Heart left ventricle (tissue), 16 donors: ENCODE measurements at regions of chr7 and their contacts with region 1.

Region 1: GRCh38 chr7:35694781-35695472 is at the start of gene HERPUD2:
- DNase-seq: peak; percentile 94 to 96 (median 95)
- ATAC-seq: peak; percentile 96 to 98 (median 98)
- H3K4me3 ChIP-seq: peak within 1 kb of the TSS; percentile 79 to 98 (median 88)
- H3K27ac ChIP-seq: peak within 1 kb of the TSS; percentile 86 to 98 (median 98)
- H3K4me1 ChIP-seq: peaks cover 2 to 55% (median 45%) of the 10 kb centered on the region in 12 donors
- H3K27me3 ChIP-seq: no peaks in the 10 kb centered on the region
- CTCF ChIP-seq: peak in 2 of 12 donors; percentile 7 to 12
- POLR2A ChIP-seq: peak; percentile 14 to 92
- total RNA-seq, gene HERPUD2: 10.3 to 26.3 (median 17.1) TPM

Region 2: GRCh38 chr7:35647171-35647574 is 47.8 kb before region 1 on chr7:
- intact Hi-C with region 1: loop called in 1 of 10 experiments (anchors 10 kb)
- DNase-seq: peak in 1 of 5 donors; percentile 41
- ATAC-seq: peak; percentile 53 to 79 (median 74)
- H3K4me3 ChIP-seq: peak overlapping the region in 2 of 12 donors; percentile 2 to 9
- H3K27ac ChIP-seq: peak overlapping the region; percentile 22 to 70 (median 54)
- H3K4me1 ChIP-seq: peaks cover 6 to 65% (median 40%) of the 10 kb centered on the region in 12 donors
- H3K27me3 ChIP-seq: no peaks in the 10 kb centered on the region
- CTCF ChIP-seq: no peak
- POLR2A ChIP-seq: no peak

Region 3: DNA sequence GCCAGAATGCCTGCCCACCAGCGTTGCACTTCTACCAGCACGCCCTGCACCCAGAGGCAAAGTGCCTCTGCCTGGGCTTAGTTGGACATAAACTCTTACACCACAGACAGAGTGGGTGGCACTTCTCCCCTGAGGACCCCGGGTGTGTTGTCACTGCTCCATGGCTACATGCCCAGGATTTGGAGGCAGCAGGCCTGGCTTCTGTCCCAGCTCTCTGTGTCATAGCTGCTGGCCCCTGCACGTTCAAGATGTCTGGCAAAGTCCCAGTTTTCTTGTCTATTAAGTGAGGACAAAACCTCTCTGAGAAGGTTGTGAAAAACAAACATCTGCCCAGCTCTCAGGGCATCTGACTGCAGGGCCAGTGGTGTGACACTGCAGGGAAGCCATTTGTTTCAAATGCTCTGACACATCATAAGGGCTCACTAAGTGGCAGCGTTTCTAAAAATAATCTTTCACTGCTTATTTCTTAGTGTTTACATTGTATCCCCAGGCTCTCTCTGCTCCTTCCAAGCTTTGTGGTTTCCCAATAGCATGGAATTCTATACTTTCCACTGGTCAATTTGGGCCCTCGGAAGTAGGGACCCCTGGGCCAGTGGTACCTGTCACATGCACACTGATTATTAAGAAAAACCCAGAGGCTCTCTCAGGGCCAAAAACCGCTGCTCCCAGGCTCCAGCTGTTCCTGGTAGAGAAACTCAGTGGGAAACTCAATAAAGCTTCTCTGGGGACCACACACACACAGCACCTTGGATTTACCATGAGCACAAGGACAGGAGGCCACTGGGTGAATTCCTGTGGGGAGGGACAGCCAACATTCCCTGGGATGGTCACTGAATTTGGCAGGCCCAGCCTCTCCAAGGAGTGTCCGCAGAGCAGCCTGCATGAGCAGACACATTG is 608.5 kb after region 1 on chr7:
- intact Hi-C with region 1: loop called in 2 of 10 experiments (anchors 10 kb)
- DNase-seq: peak; percentile 88 to 95 (median 90)
- ATAC-seq: peak; percentile 87 to 92 (median 90)
- H3K4me3 ChIP-seq: no peak overlapping the region
- H3K27ac ChIP-seq: peak overlapping the region; percentile 38 to 83 (median 79)
- H3K4me1 ChIP-seq: peaks cover 10 to 72% (median 44%) of the 10 kb centered on the region in 12 donors
- H3K27me3 ChIP-seq: no peaks in the 10 kb centered on the region
- CTCF ChIP-seq: no peak
- POLR2A ChIP-seq: no peak